ENCODE measurements at regions of chr10 and their contacts with region 1.

Region 1: DNA sequence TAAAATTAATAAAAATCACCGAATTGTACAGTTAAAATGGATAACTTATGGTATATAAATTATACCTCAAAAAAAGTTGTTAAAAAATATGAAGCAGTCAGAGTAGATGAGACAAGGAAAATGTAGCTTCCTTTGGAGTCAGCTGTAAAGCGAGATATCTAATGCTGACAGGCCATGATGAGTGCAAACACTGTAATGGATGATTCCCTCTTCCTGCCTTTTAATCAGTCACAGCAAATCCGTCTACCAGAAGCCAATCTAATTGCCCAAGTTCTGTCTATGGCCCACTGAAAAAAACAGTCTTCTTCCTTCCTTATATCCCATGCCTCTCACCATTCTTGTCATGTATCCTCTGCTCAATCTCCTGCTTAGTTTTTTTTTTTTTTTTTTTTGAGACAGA is 59.9 kb upstream of the DNAJB12 start:
- DNase-seq: no peak
- ATAC-seq: no peak
- H3K4me3 ChIP-seq: no peak overlapping the region
- H3K27ac ChIP-seq: no peak overlapping the region
- H3K4me1 ChIP-seq: no peaks in the 10 kb centered on the region
- H3K27me3 ChIP-seq: no peaks in the 10 kb centered on the region
- CTCF ChIP-seq: no peak
- EP300 ChIP-seq: no peak
- POLR2A ChIP-seq: no peak
- RAD21 ChIP-seq: no peak

Region 2: GRCh38 chr10:72260588-72261322 is 153.9 kb before region 1 on chr10:
- CTCF ChIA-PET with region 1: no interaction called
- POLR2A ChIA-PET with region 1: no interaction called
- RAD21 ChIA-PET with region 1: no interaction called
- SMC1A ChIA-PET with region 1: no interaction called
- in situ Hi-C with region 1: no loop called
- intact Hi-C with region 1: no loop called
- DNase-seq: peak; percentile 88
- ATAC-seq: peak; percentile 80
- H3K4me3 ChIP-seq: peak overlapping the region; percentile 68
- H3K27ac ChIP-seq: peak overlapping the region; percentile 95
- H3K4me1 ChIP-seq: peaks cover 68% of the 10 kb centered on the region
- H3K27me3 ChIP-seq: no peaks in the 10 kb centered on the region
- CTCF ChIP-seq: peak in 2 of 3 experiments; percentile 15 to 39; a peak in 2 of 6 replicates
- EP300 ChIP-seq: no peak; a peak in 2 of 4 replicates
- POLR2A ChIP-seq: peak; percentile 77
- RAD21 ChIP-seq: peak; percentile 9; the same call in 1 of the 2 replicates

Region 3: GRCh38 chr10:72490951-72491350 is 76.3 kb after region 1 on chr10:
- CTCF ChIA-PET with region 1: no interaction called
- POLR2A ChIA-PET with region 1: interaction called, 10 read pairs
- RAD21 ChIA-PET with region 1: no interaction called
- SMC1A ChIA-PET with region 1: interaction called, 3 read pairs
- in situ Hi-C with region 1: no loop called
- intact Hi-C with region 1: no loop called
- DNase-seq: no peak
- ATAC-seq: no peak
- H3K4me3 ChIP-seq: no peak overlapping the region
- H3K27ac ChIP-seq: no peak overlapping the region
- H3K4me1 ChIP-seq: no peaks in the 10 kb centered on the region
- H3K27me3 ChIP-seq: no peaks in the 10 kb centered on the region
- CTCF ChIP-seq: no peak
- EP300 ChIP-seq: no peak
- POLR2A ChIP-seq: no peak
- RAD21 ChIP-seq: no peak